GM18951 (cell line): ENCODE measurements at regions of chr1 and their contacts with region 1.

Region 1: GRCh38 chr1:224851210-224851847 is 78.1 kb upstream of the DNAH14 start:
- POLR2A ChIP-seq: no peak

Region 2: DNA sequence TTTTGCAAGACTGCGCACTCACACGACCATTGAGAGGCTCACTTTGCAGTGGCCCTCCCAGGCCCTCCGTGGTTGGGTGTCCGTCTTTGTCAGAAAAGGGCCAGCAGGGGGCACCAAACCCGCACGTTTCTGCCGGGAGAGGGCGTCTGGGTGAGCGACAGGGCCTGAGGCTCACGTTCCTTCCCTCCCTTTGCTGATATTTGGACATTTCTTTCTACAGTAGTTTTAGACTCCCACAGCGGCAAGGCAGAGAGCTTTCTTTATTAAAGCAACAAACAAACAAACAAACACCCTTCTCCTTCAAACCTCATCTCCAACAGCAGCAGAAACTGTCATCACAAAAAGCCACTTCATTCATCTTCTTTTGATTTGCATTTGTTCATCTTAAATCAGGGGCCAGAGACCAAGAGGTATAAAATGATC is 337.5 kb before region 1 on chr1:
- in situ Hi-C with region 1: loop called (anchors 10 kb)
- POLR2A ChIP-seq: no peak

Region 3: GRCh38 chr1:224650290-224650689 is 201.0 kb before region 1 on chr1:
- in situ Hi-C with region 1: no loop called
- POLR2A ChIP-seq: no peak

Region 4: DNA sequence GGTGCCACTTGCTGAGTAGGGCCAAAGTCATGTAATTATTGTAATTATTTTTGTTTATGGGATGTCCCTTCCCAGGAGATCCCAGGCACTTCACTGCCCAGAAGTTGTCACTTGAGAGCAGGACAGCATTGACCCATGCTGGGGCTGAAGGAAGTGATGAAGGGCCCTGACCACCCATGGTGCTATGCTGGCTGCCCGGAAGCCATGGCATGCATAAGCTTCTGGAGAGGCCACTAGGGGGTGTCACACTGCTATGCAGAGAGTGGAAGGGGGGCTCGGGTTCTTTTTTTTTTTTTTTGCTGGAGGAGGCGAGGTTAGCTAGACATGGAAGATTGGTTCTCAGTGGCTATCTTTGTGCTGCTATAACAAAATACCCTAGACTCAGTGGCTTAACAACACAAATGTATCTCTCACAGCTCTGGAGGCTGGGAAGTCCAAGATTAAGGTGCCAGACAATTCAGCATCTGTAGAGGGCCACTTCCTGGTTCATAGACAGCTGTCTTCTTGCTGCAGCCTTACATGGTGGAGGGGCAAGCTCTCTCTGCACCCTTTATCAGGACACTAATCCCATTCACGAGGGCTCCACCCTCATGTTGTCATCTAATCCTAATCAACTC is 150.3 kb before region 1 on chr1:
- in situ Hi-C with region 1: loop called (anchors 10 kb)
- POLR2A ChIP-seq: no peak

Region 5: DNA sequence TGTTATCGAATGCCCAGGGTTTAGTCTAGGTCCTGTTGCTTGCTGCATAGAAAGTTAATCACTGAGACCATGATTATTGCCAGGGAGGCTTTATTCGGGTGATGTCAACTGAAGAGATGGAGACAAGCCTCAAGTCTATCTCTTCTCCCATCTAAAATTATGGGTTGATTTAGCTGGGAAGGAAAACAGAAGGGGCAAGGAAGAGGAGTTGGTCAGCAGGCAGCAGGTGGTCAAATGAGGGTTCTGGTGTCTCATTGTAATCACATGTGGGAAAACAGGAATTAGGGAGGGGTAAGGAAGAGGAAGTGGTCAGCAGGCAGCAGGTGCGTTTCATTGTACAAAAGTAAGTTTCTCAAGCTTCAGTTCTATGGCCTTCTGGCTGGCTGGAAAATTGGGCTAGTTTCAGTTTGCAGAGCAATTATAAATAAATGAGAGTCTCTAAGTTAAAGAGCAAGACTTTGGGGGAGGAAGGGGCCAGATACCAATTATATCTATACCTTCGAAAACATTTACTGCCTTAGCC is 68.1 kb before region 1 on chr1:
- in situ Hi-C with region 1: no loop called
- POLR2A ChIP-seq: no peak

Region 6: DNA sequence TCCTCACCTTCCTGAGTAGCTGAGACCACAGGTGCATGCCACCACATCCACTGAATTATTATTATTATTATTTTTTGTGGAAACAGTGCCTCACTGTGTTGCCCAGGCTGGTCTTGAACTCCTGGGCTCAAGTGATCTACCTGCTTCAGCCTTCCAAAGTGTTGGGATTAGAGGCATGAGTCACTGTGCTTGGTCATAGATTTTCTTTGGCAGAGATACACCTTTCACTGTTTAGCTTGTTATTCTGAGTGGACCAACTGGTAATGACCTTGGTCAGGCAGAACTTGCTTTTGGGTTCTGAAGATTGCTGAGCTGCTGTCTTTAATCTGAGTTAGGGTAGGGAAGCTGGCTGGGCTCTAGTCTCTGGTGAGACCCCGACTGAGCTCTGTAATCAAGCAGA is 144.9 kb after region 1 on chr1:
- in situ Hi-C with region 1: no loop called
- POLR2A ChIP-seq: no peak